ENCODE measurements at regions of chr1 and their contacts with region 1.

Region 1: DNA sequence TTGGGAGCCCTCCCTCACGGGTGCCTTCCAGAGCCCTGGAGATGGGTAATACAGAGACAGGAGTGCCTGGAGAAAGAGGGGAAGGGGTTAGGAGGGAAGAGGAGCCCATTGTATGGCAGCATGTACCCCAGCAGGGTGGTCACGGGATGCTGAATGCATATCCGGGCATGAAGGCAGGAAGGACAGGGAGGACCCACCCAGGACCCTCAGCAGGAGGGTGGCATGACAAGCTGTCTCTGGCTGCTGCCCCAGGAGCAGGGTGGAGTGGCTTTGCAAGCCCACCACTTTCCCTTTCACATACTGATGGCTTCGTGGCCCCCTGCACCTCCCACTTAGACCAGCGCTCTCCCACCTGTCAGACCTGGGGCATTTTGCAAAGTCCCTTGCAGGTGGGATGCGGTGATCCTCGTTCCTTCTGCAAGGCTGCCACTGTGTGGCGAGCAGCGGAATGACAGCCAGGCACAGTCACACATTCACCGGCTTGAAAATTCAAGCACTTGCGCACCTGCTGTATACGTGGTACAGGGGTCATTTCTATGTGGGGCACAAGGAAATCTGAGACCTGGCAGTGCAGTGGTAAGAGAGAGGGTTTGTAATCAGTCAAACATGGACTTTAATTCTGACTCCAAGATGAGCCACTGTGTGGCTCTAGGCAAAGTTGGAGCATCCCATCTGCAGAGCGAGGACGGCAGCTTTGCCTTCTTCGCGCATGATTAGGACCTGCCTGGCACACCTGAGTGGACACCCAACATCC is 53.2 kb upstream of the TMEM51 start:
- DNase-seq: no peak
- ATAC-seq: peak; percentile 97
- H3K4me3 ChIP-seq: no peak overlapping the region
- H3K27ac ChIP-seq: no peak overlapping the region
- H3K4me1 ChIP-seq: no peaks in the 10 kb centered on the region; the same call in 1 of the 2 replicates
- H3K27me3 ChIP-seq: peaks cover 2% of the 10 kb centered on the region in 2 experiments; a peak in 2 of 4 replicates
- CTCF ChIP-seq: peak; percentile 94 to 98 (median 97)
- EP300 ChIP-seq: no peak
- POLR2A ChIP-seq: no peak
- RAD21 ChIP-seq: peak; percentile 83

Region 2: DNA sequence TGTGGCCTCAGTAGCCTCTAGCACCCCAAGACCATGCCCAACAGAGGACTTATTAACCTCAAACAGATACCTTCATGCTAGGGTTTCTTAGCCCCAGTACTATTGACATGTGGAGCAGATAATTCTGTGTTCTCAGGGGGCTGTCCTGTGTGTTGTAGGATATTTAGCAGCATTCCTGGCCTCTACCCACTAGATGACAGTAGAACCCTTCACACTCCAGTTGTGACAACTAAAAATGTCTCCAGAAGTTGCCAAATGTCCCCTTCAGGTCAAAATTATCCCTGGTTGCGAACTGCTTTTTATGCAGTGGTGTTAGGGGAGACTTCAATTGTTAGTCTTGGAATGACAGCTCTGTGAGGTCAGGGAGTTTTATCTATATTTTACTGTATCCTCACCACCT is 493.7 kb before region 1 on chr1:
- CTCF ChIA-PET with region 1: no interaction called
- POLR2A ChIA-PET with region 1: no interaction called
- RAD21 ChIA-PET with region 1: no interaction called
- SMC1A ChIA-PET with region 1: no interaction called
- in situ Hi-C with region 1: no loop called
- intact Hi-C with region 1: loop called (anchors 2 kb)
- DNase-seq: no peak
- ATAC-seq: peak; percentile 38; the same call in 1 of the 3 replicates
- H3K4me3 ChIP-seq: no peak overlapping the region
- H3K27ac ChIP-seq: no peak overlapping the region
- H3K4me1 ChIP-seq: no peaks in the 10 kb centered on the region
- H3K27me3 ChIP-seq: no peaks in the 10 kb centered on the region
- CTCF ChIP-seq: peak; percentile 32 to 62 (median 48); a peak in 5 of 6 replicates
- EP300 ChIP-seq: no peak
- POLR2A ChIP-seq: no peak
- RAD21 ChIP-seq: peak; percentile 70

Region 3: GRCh38 chr1:14778898-14779865 is 321.1 kb before region 1 on chr1:
- CTCF ChIA-PET with region 1: interaction called, 3 read pairs
- POLR2A ChIA-PET with region 1: no interaction called
- RAD21 ChIA-PET with region 1: no interaction called
- SMC1A ChIA-PET with region 1: no interaction called
- in situ Hi-C with region 1: no loop called
- intact Hi-C with region 1: loop called (anchors 5 kb)
- DNase-seq: no peak
- ATAC-seq: peak; percentile 48; the same call in 1 of the 3 replicates
- H3K4me3 ChIP-seq: no peak overlapping the region
- H3K27ac ChIP-seq: no peak overlapping the region
- H3K4me1 ChIP-seq: no peaks in the 10 kb centered on the region
- H3K27me3 ChIP-seq: no peaks in the 10 kb centered on the region
- CTCF ChIP-seq: peak; percentile 49 to 75 (median 73)
- EP300 ChIP-seq: no peak
- POLR2A ChIP-seq: no peak
- RAD21 ChIP-seq: peak; percentile 55

Region 4: GRCh38 chr1:14923727-14924452 is 176.4 kb before region 1 on chr1:
- CTCF ChIA-PET with region 1: no interaction called
- POLR2A ChIA-PET with region 1: no interaction called
- RAD21 ChIA-PET with region 1: no interaction called
- SMC1A ChIA-PET with region 1: no interaction called
- in situ Hi-C with region 1: no loop called
- intact Hi-C with region 1: loop called (anchors 10 kb)
- DNase-seq: no peak
- ATAC-seq: peak; percentile 72
- H3K4me3 ChIP-seq: no peak overlapping the region
- H3K27ac ChIP-seq: no peak overlapping the region
- H3K4me1 ChIP-seq: no peaks in the 10 kb centered on the region
- H3K27me3 ChIP-seq: peaks cover 2 to 15% of the 10 kb centered on the region in 2 experiments; a peak in 3 of 4 replicates
- CTCF ChIP-seq: no peak
- EP300 ChIP-seq: no peak
- POLR2A ChIP-seq: no peak
- RAD21 ChIP-seq: no peak

Region 5: GRCh38 chr1:14946684-14947501 is 153.4 kb before region 1 on chr1:
- CTCF ChIA-PET with region 1: no interaction called
- POLR2A ChIA-PET with region 1: no interaction called
- RAD21 ChIA-PET with region 1: no interaction called
- SMC1A ChIA-PET with region 1: no interaction called
- in situ Hi-C with region 1: no loop called
- intact Hi-C with region 1: no loop called
- DNase-seq: no peak
- ATAC-seq: no peak
- H3K4me3 ChIP-seq: no peak overlapping the region
- H3K27ac ChIP-seq: no peak overlapping the region
- H3K4me1 ChIP-seq: no peaks in the 10 kb centered on the region
- H3K27me3 ChIP-seq: no peaks in the 10 kb centered on the region; a peak in 1 of 4 replicates
- CTCF ChIP-seq: no peak
- EP300 ChIP-seq: no peak
- POLR2A ChIP-seq: no peak
- RAD21 ChIP-seq: no peak

Measured in GM12878 (cell line).